IMR-90 (cell line): ENCODE measurements at regions of chr15 and their contacts with region 1.

Region 1: GRCh38 chr15:33675246-33675645 is 293.1 kb upstream of the CHRM5 start:
- DNase-seq: no peak
- ATAC-seq: no peak
- H3K4me3 ChIP-seq: no peak overlapping the region
- H3K27ac ChIP-seq: no peak overlapping the region
- H3K4me1 ChIP-seq: no peaks in the 10 kb centered on the region
- H3K27me3 ChIP-seq: peaks cover 4% of the 10 kb centered on the region
- CTCF ChIP-seq: peak; percentile 28; the same call in 1 of the 2 replicates
- POLR2A ChIP-seq: no peak
- RAD21 ChIP-seq: peak; percentile 21; the same call in 1 of the 2 replicates

Region 2: DNA sequence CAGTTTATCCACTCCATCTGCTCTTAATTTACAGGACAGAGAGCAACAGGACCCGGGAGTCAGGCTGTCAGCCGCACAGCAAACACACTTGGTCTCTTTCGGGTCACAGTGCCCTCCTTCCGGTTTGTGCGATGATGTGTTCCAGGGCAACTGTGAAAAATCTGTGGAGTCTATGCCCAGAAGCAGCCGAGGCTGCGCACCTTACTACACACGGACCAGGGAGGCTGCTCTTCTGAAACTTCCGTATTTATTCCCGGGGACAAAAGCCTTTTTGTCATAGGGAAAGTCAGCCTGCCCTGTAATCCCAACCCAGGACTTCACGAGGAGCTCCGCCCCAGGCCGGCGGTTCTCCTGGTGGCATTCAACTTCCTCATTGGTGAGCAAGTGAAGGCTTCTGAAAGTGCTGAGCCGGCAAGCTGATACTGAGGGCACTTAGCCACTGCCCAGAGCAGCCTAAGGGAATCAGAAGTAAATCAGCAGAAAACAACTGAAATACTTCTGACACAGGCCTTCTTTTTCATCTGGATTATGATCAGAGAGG is 607.2 kb before region 1 on chr15:
- CTCF ChIA-PET with region 1: no interaction called
- POLR2A ChIA-PET with region 1: no interaction called
- dilution Hi-C with region 1: no loop called
- in situ Hi-C with region 1: loop called (anchors 25 kb)
- intact Hi-C with region 1: no loop called
- DNase-seq: no peak
- ATAC-seq: no peak
- H3K4me3 ChIP-seq: no peak overlapping the region
- H3K27ac ChIP-seq: peak overlapping the region; percentile 58
- H3K4me1 ChIP-seq: peaks cover 29% of the 10 kb centered on the region
- H3K27me3 ChIP-seq: no peaks in the 10 kb centered on the region
- CTCF ChIP-seq: no peak
- POLR2A ChIP-seq: no peak
- RAD21 ChIP-seq: no peak